AG04449 (cell line): ENCODE measurements at regions of chr6 and their contacts with region 1.

Region 1: GRCh38 chr6:37257634-37258404 is at the starts of genes TBC1D22B and TMEM217:
- DNase-seq: peak; percentile 59
- H3K4me3 ChIP-seq: peak within 1 kb of the TSS; percentile 93
- CTCF ChIP-seq: no peak

Region 2: GRCh38 chr6:37239950-37240713 is 17.7 kb before region 1 on chr6:
- CTCF ChIA-PET with region 1: interaction called, 3 read pairs
- POLR2A ChIA-PET with region 1: interaction called, 11 read pairs
- DNase-seq: peak; percentile 88
- H3K4me3 ChIP-seq: no peak overlapping the region
- CTCF ChIP-seq: no peak